Esophagus muscularis mucosa (tissue), 4 donors: ENCODE measurements at regions of chr16 and their contacts with region 1.

Region 1: GRCh38 chr16:74064120-74064735 is 232.4 kb upstream of the PSMD7 start:
- DNase-seq: no peak
- H3K4me3 ChIP-seq: no peak overlapping the region
- H3K27ac ChIP-seq: no peak overlapping the region
- H3K4me1 ChIP-seq: no peaks in the 10 kb centered on the region
- H3K27me3 ChIP-seq: peaks cover 0 to 3% (median 0%) of the 10 kb centered on the region in 4 donors
- CTCF ChIP-seq: peak in 1 of 3 experiments; percentile 22
- EP300 ChIP-seq: no peak
- POLR2A ChIP-seq: no peak

Region 2: GRCh38 chr16:74226338-74226954 is 162.2 kb after region 1 on chr16:
- intact Hi-C with region 1: loop called (anchors 5 kb)
- DNase-seq: peak; percentile 10
- H3K4me3 ChIP-seq: no peak overlapping the region
- H3K27ac ChIP-seq: no peak overlapping the region
- H3K4me1 ChIP-seq: peaks cover 0 to 7% (median 3%) of the 10 kb centered on the region in 4 donors
- H3K27me3 ChIP-seq: no peaks in the 10 kb centered on the region
- CTCF ChIP-seq: peak; percentile 35 to 63 (median 41)
- EP300 ChIP-seq: no peak
- POLR2A ChIP-seq: no peak

Region 3: GRCh38 chr16:74275002-74275636 is 210.9 kb after region 1 on chr16:
- intact Hi-C with region 1: loop called (anchors 10 kb)
- DNase-seq: no peak
- H3K4me3 ChIP-seq: no peak overlapping the region
- H3K27ac ChIP-seq: no peak overlapping the region
- H3K4me1 ChIP-seq: no peaks in the 10 kb centered on the region
- H3K27me3 ChIP-seq: no peaks in the 10 kb centered on the region
- CTCF ChIP-seq: peak in 2 of 3 experiments; percentile 36 to 42
- EP300 ChIP-seq: no peak
- POLR2A ChIP-seq: no peak